Esophagus squamous epithelium (tissue), 5 donors: ENCODE measurements at regions of chr3 and their contacts with region 1.

Region 1: GRCh38 chr3:113211330-113212149 is at the start of gene BOC:
- DNase-seq: no peak
- H3K4me3 ChIP-seq: peak within 1 kb of the TSS; percentile 64 to 95 (median 67)
- H3K27ac ChIP-seq: peak within 1 kb of the TSS; percentile 87 to 94 (median 94)
- H3K4me1 ChIP-seq: peaks cover 9 to 67% (median 15%) of the 10 kb centered on the region in 3 donors
- H3K27me3 ChIP-seq: peaks cover 0 to 23% (median 0%) of the 10 kb centered on the region in 4 donors
- CTCF ChIP-seq: no peak
- POLR2A ChIP-seq: peak in 2 of 4 donors; percentile 62 to 72
- total RNA-seq, gene BOC: 13.7 to 75.7 (median 24.1) TPM

Region 2: DNA sequence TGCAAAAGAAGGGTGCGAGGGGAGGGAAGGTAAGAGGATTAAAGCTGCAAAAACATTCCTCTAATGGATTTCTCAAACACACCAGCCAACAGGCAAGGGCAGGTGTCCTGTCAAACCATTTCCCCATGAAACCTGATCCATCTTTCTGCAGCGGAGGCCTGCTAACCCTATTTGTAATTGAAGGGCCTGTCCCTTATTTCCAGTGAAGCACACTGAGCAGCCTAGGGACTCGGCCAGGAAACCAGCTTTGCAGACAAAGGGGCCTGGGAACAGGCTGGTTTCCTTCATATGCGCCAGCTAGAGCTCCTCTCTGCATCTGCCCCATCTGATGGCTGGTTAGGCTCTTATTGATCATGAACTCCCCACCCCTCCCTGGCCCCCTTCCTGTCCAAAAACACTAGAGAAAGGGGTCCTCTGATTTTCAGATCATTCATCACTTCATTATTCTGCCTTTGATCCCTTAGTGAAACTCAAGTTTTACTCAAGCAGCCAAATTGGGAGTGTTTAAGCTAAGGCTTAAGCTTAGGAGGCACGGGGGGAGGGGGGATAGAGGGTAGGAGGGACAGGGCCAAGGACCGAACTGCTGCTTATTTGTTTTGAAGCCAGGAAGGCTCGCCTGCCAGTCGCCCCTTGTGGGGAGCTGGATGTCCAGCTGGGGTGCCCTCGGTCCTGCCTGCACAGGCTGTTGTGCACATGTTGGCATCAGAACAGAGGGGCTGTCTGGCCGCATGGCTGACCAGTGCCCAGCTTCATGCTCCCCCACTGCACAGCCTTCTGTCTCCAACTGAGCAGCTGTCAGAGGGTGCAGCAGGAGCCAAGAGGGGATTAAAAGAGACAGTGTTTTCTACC is 53.0 kb after region 1 on chr3:
- intact Hi-C with region 1: loop called (anchors 10 kb)
- DNase-seq: no peak
- H3K4me3 ChIP-seq: no peak overlapping the region
- H3K27ac ChIP-seq: peak overlapping the region; percentile 18 to 80 (median 58)
- H3K4me1 ChIP-seq: peaks cover 14 to 99% (median 53%) of the 10 kb centered on the region in 3 donors
- H3K27me3 ChIP-seq: no peaks in the 10 kb centered on the region
- CTCF ChIP-seq: no peak
- POLR2A ChIP-seq: no peak